Endothelial cell of umbilical vein (primary cell): ENCODE measurements at regions of chrX and their contacts with region 1.

Region 1: GRCh38 chrX:24371391-24371972 is 11.0 kb downstream of the SUPT20HL1 start:
- DNase-seq: peak; percentile 48
- H3K4me3 ChIP-seq: no peak overlapping the region
- H3K27ac ChIP-seq: no peak overlapping the region
- H3K4me1 ChIP-seq: no peaks in the 10 kb centered on the region
- H3K27me3 ChIP-seq: no peaks in the 10 kb centered on the region
- CTCF ChIP-seq: peak; percentile 48 to 62
- POLR2A ChIP-seq: no peak

Region 2: GRCh38 chrX:24259544-24260240 is 111.8 kb before region 1 on chrX:
- CTCF ChIA-PET with region 1: interaction called, 36 read pairs
- POLR2A ChIA-PET with region 1: no interaction called
- dilution Hi-C with region 1: no loop called
- intact Hi-C with region 1: loop called (anchors 1 kb)
- DNase-seq: peak; percentile 32
- H3K4me3 ChIP-seq: no peak overlapping the region
- H3K27ac ChIP-seq: no peak overlapping the region
- H3K4me1 ChIP-seq: peaks cover 4% of the 10 kb centered on the region
- H3K27me3 ChIP-seq: no peaks in the 10 kb centered on the region
- CTCF ChIP-seq: peak; percentile 38 to 41
- POLR2A ChIP-seq: no peak

Region 3: GRCh38 chrX:24306440-24306839 is 65.0 kb before region 1 on chrX:
- CTCF ChIA-PET with region 1: no interaction called
- POLR2A ChIA-PET with region 1: no interaction called
- dilution Hi-C with region 1: no loop called
- intact Hi-C with region 1: no loop called
- DNase-seq: peak; percentile 1
- H3K4me3 ChIP-seq: no peak overlapping the region
- H3K27ac ChIP-seq: no peak overlapping the region
- H3K4me1 ChIP-seq: no peaks in the 10 kb centered on the region
- H3K27me3 ChIP-seq: no peaks in the 10 kb centered on the region
- CTCF ChIP-seq: peak in 1 of 2 donors; percentile 3
- POLR2A ChIP-seq: no peak

Region 4: GRCh38 chrX:24357106-24357505 is 14.4 kb before region 1 on chrX:
- CTCF ChIA-PET with region 1: interaction called, 17 read pairs
- POLR2A ChIA-PET with region 1: no interaction called
- dilution Hi-C with region 1: no loop called
- intact Hi-C with region 1: no loop called
- DNase-seq: peak; percentile 66
- H3K4me3 ChIP-seq: no peak overlapping the region
- H3K27ac ChIP-seq: peak overlapping the region; percentile 30
- H3K4me1 ChIP-seq: peaks cover 15% of the 10 kb centered on the region
- H3K27me3 ChIP-seq: no peaks in the 10 kb centered on the region
- CTCF ChIP-seq: no peak
- POLR2A ChIP-seq: no peak

Region 5: GRCh38 chrX:24498975-24499374 is 127.5 kb after region 1 on chrX:
- CTCF ChIA-PET with region 1: interaction called, 30 read pairs
- POLR2A ChIA-PET with region 1: no interaction called
- dilution Hi-C with region 1: no loop called
- intact Hi-C with region 1: no loop called
- DNase-seq: peak; percentile 21
- H3K4me3 ChIP-seq: no peak overlapping the region
- H3K27ac ChIP-seq: no peak overlapping the region
- H3K4me1 ChIP-seq: peaks cover 12% of the 10 kb centered on the region
- H3K27me3 ChIP-seq: no peaks in the 10 kb centered on the region
- CTCF ChIP-seq: no peak
- POLR2A ChIP-seq: no peak

Region 6: DNA sequence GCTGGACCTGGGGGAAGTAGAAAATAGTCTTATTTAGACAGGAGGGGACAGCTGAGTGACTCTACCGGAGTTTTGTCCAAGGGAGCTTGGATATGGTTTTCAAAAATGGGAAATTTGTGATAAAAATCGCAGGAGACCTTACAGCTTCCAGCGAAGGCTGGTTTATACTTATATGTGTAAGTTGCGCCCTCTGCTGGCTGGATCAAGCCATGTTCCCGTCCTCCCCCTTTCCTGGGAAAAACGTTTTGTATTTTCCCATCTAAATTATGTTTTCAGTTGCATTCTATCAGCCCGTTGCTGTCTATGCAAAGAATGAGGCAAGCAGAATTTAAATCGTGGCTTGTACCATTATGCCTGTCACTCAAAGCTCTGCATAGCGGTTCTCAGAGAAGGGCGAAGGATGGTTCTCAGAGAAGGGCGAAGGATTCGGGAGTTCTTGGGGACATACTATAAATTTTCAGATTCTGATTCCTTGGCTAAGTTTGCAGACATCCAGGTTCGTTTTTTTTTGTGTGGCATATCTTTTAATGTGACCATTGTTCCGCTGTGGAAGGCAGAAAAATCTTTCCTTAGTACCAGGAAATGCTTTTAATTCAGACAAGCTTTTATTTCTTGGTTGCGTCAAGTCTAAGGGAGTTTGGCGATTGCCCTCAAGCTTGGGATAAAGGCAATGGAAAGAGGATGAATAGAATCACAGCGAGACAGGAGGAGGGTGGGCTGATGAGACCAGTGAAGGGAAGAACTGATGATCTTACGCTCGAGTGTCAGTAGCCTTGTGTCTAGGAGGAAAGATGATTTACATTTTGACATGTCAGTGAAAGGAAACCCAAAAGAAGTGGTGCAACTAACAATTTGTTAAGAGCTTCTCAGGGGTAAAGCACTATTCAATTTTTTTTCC is 772.8 kb after region 1 on chrX:
- CTCF ChIA-PET with region 1: interaction called, 5 read pairs
- POLR2A ChIA-PET with region 1: no interaction called
- dilution Hi-C with region 1: no loop called
- intact Hi-C with region 1: loop called (anchors 1 kb)
- DNase-seq: peak; percentile 43
- H3K4me3 ChIP-seq: no peak overlapping the region
- H3K27ac ChIP-seq: no peak overlapping the region
- H3K4me1 ChIP-seq: no peaks in the 10 kb centered on the region
- H3K27me3 ChIP-seq: peaks cover 3 to 7% of the 10 kb centered on the region in 2 experiments
- CTCF ChIP-seq: peak; percentile 47 to 61
- POLR2A ChIP-seq: no peak